Left cardiac atrium (tissue), 4 donors: ENCODE measurements at regions of chr20 and their contacts with region 1.

Region 1: GRCh38 chr20:1813101-1813529 is 82.1 kb upstream of the SIRPA start:
- DNase-seq: peak; percentile 88
- ATAC-seq: peak; percentile 31 to 80

Region 2: GRCh38 chr20:1830240-1830639 is 17.1 kb after region 1 on chr20:
- intact Hi-C with region 1: loop called in 1 of 2 experiments (anchors 1 kb)
- DNase-seq: peak; percentile 86
- ATAC-seq: peak; percentile 86 to 91